ENCODE measurements at regions of chr16 and their contacts with region 1.

Region 1: GRCh38 chr16:4624015-4624826 is at the start of gene MGRN1:
- DNase-seq: peak; percentile 93
- H3K4me3 Mint-ChIP-seq: peak within 1 kb of the TSS; percentile 99
- H3K27ac Mint-ChIP-seq: peak within 1 kb of the TSS; percentile 95
- H3K4me1 Mint-ChIP-seq: peaks cover 22% of the 10 kb centered on the region
- H3K27me3 Mint-ChIP-seq: no peaks in the 10 kb centered on the region
- total RNA-seq, gene MGRN1: 110 and 119 TPM in 2 replicates

Region 2: GRCh38 chr16:4425378-4426020 is 198.7 kb before region 1 on chr16 and contains the start of gene DNAJA3:
- intact Hi-C with region 1: loop called (anchors 2 kb)
- DNase-seq: peak; percentile 91
- H3K4me3 Mint-ChIP-seq: peak within 1 kb of the TSS; percentile 98
- H3K27ac Mint-ChIP-seq: peak within 1 kb of the TSS; percentile 100
- H3K4me1 Mint-ChIP-seq: peaks cover 31% of the 10 kb centered on the region
- H3K27me3 Mint-ChIP-seq: peaks cover 3% of the 10 kb centered on the region
- total RNA-seq, gene DNAJA3: 103 and 107 TPM in 2 replicates

Region 3: DNA sequence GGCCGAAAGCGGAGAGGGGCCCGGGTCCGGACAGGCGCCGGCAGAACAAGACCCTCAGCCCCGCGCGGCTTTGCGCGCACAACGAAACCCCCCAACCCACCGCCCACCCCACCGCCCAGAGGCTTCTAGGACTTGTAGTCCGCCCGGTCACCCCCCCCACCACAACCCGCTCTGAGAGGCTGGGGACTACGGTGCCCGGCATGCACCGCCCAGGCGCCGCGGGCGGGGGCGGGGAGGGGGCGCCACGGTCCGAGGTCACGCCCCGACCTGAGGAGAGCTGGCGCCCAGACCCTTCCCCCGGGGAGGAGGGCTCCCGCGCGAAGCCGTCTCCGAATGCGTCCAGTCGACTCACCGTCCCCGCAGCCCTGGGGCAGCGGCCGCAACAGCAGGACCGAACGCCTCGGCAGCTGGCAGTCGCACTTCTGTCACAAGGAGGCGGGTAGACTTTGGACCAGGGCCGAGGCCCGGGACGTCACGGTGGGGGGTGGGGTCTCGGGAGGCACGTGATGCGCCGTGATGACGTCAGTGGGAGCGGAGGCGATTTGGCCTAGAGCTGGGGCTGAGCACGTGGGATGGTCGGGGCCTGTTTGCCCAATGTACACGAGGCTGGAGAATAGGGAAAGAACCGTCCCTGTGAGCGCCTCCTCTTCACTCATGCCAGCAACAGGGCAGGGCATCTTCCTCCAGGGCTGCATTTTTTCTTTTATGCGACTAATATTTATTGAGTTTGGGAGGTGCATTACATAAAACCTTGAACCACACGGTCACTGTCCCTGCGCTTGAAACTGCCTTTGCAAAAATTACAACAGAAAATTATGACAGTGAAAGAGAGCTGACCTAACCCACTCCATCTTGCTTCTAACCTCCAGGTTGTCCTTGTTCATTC is 85.6 kb before region 1 on chr16 and contains the start of gene CDIP1:
- intact Hi-C with region 1: loop called (anchors 2 kb)
- DNase-seq: peak; percentile 86
- H3K4me3 Mint-ChIP-seq: peak within 1 kb of the TSS; percentile 80
- H3K27ac Mint-ChIP-seq: peak within 1 kb of the TSS; percentile 82
- H3K4me1 Mint-ChIP-seq: peaks cover 40% of the 10 kb centered on the region
- H3K27me3 Mint-ChIP-seq: peaks cover 5% of the 10 kb centered on the region
- total RNA-seq, gene CDIP1: 61.6 and 62.7 TPM in 2 replicates

Region 4: DNA sequence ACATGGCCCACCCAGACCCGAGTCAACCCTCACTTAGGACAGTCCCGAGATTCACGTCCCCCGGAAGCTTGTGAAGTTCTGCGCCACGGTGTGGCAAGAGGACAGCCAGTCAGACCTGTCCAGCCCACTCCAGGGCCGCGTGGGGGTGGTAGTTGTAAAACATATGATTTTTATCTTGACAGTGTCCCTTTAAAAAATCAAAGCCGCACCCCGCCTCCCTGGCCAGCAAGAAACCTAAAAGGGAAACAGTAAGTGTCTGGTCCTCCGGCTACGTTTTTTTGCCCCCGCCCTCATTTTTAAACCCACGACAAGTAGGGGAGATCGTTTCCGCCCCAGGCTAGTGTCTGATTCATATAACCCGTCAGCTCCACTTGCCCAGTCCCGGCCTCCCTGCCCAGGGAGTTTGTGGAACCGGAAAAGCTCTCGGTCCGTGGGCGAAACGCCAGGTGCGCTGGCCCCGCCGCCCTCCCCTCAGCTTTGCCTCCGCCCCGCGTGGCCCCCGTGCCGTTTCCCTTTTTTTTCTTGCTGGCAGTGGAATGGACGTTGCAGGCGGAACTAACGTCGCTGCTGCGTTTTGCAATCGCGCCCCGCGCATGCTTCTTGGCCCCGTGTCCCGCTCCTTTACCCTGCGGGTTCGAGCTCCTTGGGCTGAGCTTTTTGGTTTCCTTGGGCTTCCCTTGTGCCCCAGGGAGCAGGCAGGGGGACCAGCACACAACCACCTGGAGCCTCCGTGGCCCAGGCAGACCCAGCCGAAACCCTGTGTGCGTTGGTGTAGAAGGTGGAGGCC is 55.8 kb after region 1 on chr16:
- intact Hi-C with region 1: loop called (anchors 1 kb)
- DNase-seq: no peak
- H3K4me3 Mint-ChIP-seq: no peak overlapping the region
- H3K27ac Mint-ChIP-seq: no peak overlapping the region
- H3K4me1 Mint-ChIP-seq: peaks cover 30% of the 10 kb centered on the region
- H3K27me3 Mint-ChIP-seq: no peaks in the 10 kb centered on the region

Region 5: GRCh38 chr16:4734063-4734729 is 110.0 kb after region 1 on chr16 and contains the starts of genes ANKS3 and DNAAF8:
- intact Hi-C with region 1: loop called (anchors 1 kb)
- DNase-seq: peak; percentile 81
- H3K4me3 Mint-ChIP-seq: peak within 1 kb of the TSS; percentile 88
- H3K27ac Mint-ChIP-seq: peak within 1 kb of the TSS; percentile 84
- H3K4me1 Mint-ChIP-seq: peaks cover 26% of the 10 kb centered on the region
- H3K27me3 Mint-ChIP-seq: no peaks in the 10 kb centered on the region
- total RNA-seq, gene ANKS3: 21.1 and 25.8 TPM in 2 replicates
- total RNA-seq, gene DNAAF8: not detected in 2 replicates